ENCODE measurements at regions of chr14 and their contacts with region 1.

Region 1: GRCh38 chr14:24310646-24311604 is at the start of gene LTB4R:
- DNase-seq: peak; percentile 83
- ATAC-seq: peak; percentile 88
- H3K4me3 Mint-ChIP-seq: peak within 1 kb of the TSS; percentile 84
- H3K27ac Mint-ChIP-seq: peak within 1 kb of the TSS; percentile 84
- H3K4me1 Mint-ChIP-seq: peaks cover 66% of the 10 kb centered on the region
- H3K27me3 Mint-ChIP-seq: no peaks in the 10 kb centered on the region
- total RNA-seq, gene LTB4R: 27.0 to 27.8 TPM

Region 2: GRCh38 chr14:24299255-24300195 is 11.4 kb before region 1 on chr14 and contains the starts of genes DHRS1 and NOP9:
- POLR2A ChIA-PET with region 1: interaction called, 43 read pairs
- DNase-seq: peak; percentile 97
- ATAC-seq: peak; percentile 82
- H3K4me3 Mint-ChIP-seq: peak within 1 kb of the TSS; percentile 94
- H3K27ac Mint-ChIP-seq: peak within 1 kb of the TSS; percentile 95
- H3K4me1 Mint-ChIP-seq: peaks cover 41% of the 10 kb centered on the region
- H3K27me3 Mint-ChIP-seq: no peaks in the 10 kb centered on the region
- total RNA-seq, gene DHRS1: 36.0 to 41.9 TPM
- total RNA-seq, gene NOP9: 28.7 to 31.1 TPM

Region 3: GRCh38 chr14:24332268-24332993 is 21.5 kb after region 1 on chr14:
- POLR2A ChIA-PET with region 1: interaction called, 17 read pairs
- DNase-seq: peak; percentile 76
- ATAC-seq: peak; percentile 73
- H3K4me3 Mint-ChIP-seq: peak overlapping the region; percentile 82
- H3K27ac Mint-ChIP-seq: peak overlapping the region; percentile 77
- H3K4me1 Mint-ChIP-seq: peaks cover 46% of the 10 kb centered on the region
- H3K27me3 Mint-ChIP-seq: peaks cover 32% of the 10 kb centered on the region

Region 4: DNA sequence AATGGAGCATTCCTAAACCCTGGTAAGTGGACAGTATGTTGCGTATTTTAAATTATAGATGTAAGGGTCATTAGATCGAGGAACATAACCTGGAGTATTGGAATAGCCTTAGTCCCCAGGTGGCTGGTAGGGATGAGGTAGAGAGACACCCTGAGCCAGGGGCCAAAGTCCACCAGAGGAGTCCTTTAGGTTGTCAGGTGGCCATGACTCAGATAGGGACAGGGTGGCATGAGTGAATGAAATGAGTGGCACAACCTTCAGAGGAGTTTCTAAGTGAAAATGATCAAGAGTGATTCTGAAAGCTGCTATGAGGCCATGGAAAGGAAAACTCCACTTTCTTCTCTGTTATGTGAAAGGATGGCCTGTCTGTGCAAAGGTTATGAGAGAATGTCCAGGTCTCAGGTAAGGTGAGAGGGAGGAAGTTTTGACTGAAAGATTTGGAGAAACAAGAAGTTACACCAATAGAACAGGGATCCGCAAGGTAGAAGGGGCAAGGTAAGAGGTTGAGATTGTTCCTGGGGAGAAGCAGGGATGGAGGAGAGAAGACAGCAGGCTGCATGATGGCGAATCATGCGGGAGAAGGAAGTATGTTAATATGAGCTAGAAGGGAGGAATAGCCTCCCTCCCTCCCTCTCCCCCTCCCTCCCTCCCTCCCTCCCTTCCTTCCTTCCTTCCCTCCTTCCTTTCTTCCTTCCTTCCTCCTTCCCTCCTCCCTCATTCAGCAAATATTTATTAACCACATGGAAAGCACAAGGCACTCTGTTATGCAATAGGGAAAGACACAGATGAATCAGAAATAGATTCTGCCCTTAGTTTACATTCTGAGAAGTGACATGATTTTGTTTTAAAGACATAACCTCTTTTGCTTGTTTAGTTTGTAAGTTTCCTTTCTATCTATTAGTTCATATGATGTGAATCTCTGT is 42.9 kb after region 1 on chr14:
- POLR2A ChIA-PET with region 1: no interaction called
- DNase-seq: no peak
- ATAC-seq: no peak
- H3K4me3 Mint-ChIP-seq: no peak overlapping the region
- H3K27ac Mint-ChIP-seq: no peak overlapping the region
- H3K4me1 Mint-ChIP-seq: no peaks in the 10 kb centered on the region
- H3K27me3 Mint-ChIP-seq: peaks cover 51% of the 10 kb centered on the region